ENCODE measurements at regions of chr3 and their contacts with region 1.

Region 1: DNA sequence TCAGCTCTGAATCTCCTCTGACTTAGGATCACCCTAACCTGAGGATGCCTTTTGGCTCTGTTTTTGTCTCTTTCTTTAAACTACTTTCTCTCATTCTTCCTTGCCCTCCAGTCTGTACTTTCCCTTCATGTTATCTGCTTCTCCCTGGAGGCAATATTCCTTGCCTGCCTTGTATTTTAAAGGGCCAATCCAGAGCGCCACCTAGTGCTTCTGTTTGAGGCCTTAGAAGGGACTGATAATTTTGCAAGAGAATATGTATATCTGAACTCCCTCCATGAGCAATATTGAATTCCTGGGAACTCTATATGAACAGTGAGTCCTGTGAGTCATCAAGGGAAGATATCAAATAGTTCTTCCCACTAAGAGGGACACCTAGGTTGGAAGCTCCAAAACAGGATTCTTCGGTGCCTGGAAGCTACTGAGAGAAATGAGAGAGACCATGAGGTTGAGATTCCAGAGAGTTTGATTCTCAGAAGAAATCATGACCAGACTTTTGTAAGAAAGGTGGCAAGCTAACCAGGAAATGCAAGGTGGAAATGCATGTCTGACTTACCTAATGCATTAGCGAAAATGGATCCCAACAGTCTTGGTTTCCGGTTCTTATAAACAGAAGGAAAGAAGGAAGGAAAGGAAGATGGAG is 203.8 kb upstream of the CD96 start:
- DNase-seq: peak; percentile 82
- H3K4me3 ChIP-seq: no peak overlapping the region
- H3K27ac ChIP-seq: no peak overlapping the region
- H3K4me1 ChIP-seq: no peaks in the 10 kb centered on the region
- H3K27me3 ChIP-seq: no peaks in the 10 kb centered on the region
- CTCF ChIP-seq: peak; percentile 85

Region 2: DNA sequence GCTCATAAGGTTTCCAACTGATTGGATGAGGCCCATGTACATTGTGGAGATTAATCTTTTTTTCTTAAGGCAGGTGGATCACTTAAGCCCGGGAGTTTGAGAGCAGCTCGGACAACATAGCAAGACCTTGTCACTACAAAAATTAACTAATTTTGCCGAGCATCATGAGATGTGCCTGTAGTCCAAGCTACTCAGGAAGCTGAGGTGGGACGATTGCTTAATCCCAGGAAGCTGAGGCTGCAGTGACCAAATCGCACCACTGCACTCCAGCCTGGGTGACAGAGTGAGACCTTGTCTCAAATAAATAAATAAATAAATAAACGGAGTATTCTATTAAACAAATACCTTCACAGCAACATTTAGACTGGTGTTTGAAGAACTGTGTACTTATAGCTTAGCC is 1801.9 kb before region 1 on chr3:
- CTCF ChIA-PET with region 1: no interaction called
- POLR2A ChIA-PET with region 1: no interaction called
- intact Hi-C with region 1: loop called (anchors 5 kb)
- DNase-seq: no peak
- H3K4me3 ChIP-seq: no peak overlapping the region
- H3K27ac ChIP-seq: no peak overlapping the region
- H3K4me1 ChIP-seq: no peaks in the 10 kb centered on the region
- H3K27me3 ChIP-seq: no peaks in the 10 kb centered on the region
- CTCF ChIP-seq: no peak

Region 3: DNA sequence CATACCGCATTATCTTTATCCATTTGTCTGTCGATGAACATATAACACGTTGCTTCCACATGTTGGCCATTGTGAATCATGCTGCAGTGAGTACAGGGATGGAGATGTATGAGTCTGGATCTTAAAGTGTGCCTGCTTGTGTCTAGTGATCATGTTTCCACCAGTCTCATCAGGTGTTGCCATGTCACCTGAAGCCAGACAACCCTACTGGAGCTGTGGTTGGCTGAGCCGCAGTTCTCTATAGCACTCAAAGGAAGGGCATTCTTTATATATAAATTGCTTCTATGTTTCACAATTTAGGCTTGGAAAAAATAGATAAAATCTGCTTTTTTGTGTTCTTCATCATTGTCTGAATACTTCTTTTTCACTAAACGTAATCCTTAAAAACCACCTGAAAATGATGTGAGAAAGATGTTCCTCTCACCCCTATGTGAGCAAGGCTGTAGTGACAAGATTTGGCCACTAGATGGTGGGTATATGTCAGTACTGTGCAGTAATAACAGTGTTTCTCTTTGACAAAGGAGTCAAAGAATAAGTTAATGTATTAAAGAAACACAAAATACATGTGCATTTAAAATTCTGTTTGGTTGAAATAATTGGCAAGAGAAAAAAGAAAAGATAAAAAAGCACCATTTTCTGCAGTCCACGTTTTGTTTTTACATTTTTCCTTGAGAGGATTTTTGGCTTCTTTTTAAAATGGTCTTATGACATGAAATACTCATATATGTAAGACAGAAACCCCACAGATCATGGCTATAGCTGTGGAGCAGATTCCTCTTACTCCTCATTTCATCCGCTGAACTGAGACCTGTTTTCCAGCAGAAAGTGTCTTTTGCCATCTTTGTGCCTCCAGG is 1606.3 kb before region 1 on chr3:
- CTCF ChIA-PET with region 1: no interaction called
- POLR2A ChIA-PET with region 1: no interaction called
- intact Hi-C with region 1: loop called (anchors 10 kb)
- DNase-seq: peak; percentile 58
- H3K4me3 ChIP-seq: no peak overlapping the region
- H3K27ac ChIP-seq: no peak overlapping the region
- H3K4me1 ChIP-seq: no peaks in the 10 kb centered on the region
- H3K27me3 ChIP-seq: no peaks in the 10 kb centered on the region
- CTCF ChIP-seq: peak; percentile 83

Region 4: DNA sequence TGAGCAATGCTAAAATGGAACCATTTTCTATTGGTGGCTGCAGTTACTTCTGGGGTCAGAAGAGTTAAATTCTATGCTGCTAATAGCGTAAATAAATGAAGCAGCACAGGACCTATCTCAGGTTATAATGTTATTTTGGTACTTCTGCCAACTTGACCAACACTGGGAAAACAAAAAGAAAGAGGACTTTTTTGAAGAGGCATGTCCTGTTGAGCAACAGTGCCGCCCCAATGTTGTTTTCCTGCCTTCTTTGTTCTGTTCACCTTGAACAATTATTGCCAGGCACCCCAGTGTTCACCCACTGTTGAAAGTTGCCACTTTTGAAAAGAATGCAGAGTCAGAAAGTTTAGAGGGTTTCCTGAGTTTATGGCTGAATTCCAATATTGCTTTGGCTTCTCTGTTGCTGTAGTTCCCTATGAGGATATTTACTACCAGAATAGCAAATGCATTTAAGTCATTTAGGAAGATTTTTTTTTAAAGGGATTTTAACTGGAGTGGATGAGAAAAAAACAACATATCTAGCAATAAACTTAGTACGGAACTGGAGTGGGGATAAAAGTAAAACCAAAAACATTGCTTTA is 1321.9 kb before region 1 on chr3:
- CTCF ChIA-PET with region 1: no interaction called
- POLR2A ChIA-PET with region 1: no interaction called
- intact Hi-C with region 1: no loop called
- DNase-seq: no peak
- H3K4me3 ChIP-seq: no peak overlapping the region
- H3K27ac ChIP-seq: no peak overlapping the region
- H3K4me1 ChIP-seq: no peaks in the 10 kb centered on the region
- H3K27me3 ChIP-seq: no peaks in the 10 kb centered on the region
- CTCF ChIP-seq: no peak

Region 5: DNA sequence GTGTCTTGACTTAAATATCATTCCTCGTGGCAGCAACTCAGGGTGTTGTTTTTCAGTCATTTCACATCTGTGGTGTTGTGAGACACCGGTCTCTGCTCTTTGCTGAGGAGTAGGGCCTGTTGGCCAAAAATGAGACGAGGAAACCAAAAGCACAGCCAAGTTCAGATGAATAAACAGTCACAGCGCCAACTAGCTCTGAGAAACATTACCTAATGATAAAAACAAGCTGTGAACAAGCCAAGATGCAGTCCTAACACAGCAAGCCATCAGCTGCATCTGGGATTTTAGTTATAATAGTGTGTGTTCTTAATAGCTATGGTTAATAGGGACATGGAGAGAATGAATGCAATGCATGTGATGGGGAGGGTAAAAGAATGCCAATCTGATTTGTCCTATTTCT is 1157.4 kb before region 1 on chr3:
- CTCF ChIA-PET with region 1: no interaction called
- POLR2A ChIA-PET with region 1: no interaction called
- intact Hi-C with region 1: loop called (anchors 5 kb)
- DNase-seq: no peak
- H3K4me3 ChIP-seq: no peak overlapping the region
- H3K27ac ChIP-seq: no peak overlapping the region
- H3K4me1 ChIP-seq: no peaks in the 10 kb centered on the region
- H3K27me3 ChIP-seq: no peaks in the 10 kb centered on the region
- CTCF ChIP-seq: no peak

Region 6: GRCh38 chr3:110859336-110859735 is 478.8 kb before region 1 on chr3:
- CTCF ChIA-PET with region 1: no interaction called
- POLR2A ChIA-PET with region 1: no interaction called
- intact Hi-C with region 1: no loop called
- DNase-seq: no peak
- H3K4me3 ChIP-seq: no peak overlapping the region
- H3K27ac ChIP-seq: no peak overlapping the region
- H3K4me1 ChIP-seq: no peaks in the 10 kb centered on the region
- H3K27me3 ChIP-seq: no peaks in the 10 kb centered on the region
- CTCF ChIP-seq: no peak

Region 7: DNA sequence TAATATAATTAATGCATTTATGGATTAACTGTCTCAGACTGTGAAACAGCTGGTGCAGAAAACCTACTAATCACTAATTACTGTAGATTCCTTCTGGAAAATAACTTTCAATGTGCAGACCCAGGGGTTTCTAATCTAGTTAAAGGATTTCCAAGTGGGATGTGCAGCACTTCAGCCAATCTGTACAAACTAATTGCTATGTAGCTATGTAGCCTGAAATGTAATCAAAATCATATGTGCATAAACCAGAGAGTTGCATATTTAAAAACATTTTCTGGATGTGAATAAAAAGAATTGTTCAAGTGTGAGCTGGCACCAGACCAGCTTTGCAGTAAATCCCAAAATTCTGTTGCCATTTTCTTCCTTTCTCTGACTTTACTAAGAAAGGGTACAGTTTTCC is 76.4 kb after region 1 on chr3:
- CTCF ChIA-PET with region 1: no interaction called
- POLR2A ChIA-PET with region 1: no interaction called
- intact Hi-C with region 1: no loop called
- DNase-seq: peak; percentile 19
- H3K4me3 ChIP-seq: no peak overlapping the region
- H3K27ac ChIP-seq: no peak overlapping the region
- H3K4me1 ChIP-seq: no peaks in the 10 kb centered on the region
- H3K27me3 ChIP-seq: peaks cover 4% of the 10 kb centered on the region
- CTCF ChIP-seq: no peak